ENCODE measurements at regions of chr12 and their contacts with region 1.

Region 1: DNA sequence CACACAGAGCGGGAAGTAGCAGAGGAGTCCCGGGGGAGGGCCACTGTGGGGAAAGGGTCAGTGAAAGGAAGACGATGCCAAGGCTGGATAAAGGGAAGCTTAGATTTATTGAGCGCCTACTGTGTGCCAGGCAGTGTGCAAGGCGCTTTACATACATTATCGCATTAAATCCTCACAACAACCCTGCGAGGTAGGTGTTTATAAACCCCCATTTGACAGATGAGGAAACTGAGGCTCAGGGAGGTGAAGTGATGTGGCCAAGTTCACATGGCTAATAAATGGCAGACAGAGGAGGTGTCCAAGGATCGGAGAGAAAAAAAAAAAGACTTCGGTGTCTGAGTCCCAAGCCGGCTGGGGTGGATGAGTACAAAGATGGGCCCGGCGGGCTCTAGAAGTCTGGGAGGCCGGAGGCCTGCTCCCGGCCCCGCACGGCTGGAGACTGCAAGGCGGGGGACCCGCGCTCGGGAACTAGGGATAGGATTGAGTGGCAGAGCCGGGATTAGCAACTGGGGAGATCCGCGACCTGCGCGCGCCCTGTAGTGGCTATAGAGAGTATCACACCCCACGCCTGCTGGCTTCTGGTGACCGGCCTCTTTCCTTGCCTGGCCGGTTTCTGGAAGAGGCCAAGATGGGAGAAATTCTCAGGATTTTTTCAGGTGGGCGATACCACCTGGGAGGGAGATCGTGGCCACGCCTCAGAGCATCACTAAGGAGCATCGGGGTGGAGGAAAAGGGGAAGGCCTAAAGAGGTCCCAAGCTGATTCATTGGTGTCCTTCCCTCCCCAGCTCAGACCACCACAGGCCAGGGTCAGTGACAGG is 3.9 kb downstream of the DDN start:
- H3K4me3 ChIP-seq: no peak overlapping the region
- H3K27ac ChIP-seq: no peak overlapping the region
- H3K4me1 ChIP-seq: peaks cover 6% of the 10 kb centered on the region
- CTCF ChIP-seq: peak; percentile 68

Region 2: DNA sequence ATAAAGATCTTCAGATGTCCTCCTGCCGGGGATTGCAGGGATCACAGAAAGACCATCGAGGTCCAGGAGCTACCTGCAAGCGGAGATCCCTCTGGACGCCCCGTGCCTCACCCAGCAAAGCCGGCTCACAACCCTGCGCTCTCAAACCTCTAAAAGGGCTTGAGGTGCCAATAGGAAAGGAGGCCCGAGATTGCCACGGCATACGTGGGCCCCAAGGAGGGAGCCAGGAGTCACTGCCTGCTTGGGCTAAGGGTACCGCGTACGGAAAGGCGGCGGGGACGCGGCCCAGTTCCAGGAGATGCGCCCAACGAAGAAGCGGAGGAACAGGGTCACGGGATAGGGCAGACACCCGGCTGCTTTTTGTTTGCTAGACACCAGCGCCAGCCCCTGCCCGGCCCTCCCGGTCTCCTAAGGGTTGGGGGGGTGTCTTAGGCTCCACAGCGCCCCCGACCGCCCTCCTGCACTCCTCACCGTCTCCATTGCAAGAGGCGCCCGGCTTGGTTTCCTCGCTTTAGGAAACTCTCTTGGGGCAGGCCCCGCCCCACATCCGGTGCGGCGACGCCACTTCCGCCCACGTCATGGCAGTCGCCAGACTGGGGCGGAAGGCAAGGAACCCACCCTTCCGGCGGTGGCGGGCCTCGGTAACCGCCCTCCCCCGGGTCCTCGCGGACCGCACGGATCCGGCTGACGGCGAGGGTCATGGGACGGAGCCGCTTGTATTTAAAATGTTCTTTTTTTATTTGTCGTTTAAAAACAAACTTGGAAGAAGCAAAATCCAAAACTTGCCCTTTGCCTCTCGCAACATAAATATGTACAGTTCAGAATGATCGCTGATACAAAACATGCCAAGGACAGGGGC is 23.2 kb after region 1 on chr12 and contains the start of gene PRKAG1:
- CTCF ChIA-PET with region 1: interaction called, 53 read pairs
- POLR2A ChIA-PET with region 1: interaction called, 6 read pairs
- H3K4me3 ChIP-seq: peak within 1 kb of the TSS; percentile 95
- H3K27ac ChIP-seq: peak within 1 kb of the TSS; percentile 84
- H3K4me1 ChIP-seq: no peaks in the 10 kb centered on the region; the same call in 1 of the 2 replicates
- CTCF ChIP-seq: peak; percentile 91